Heart left ventricle (tissue), 16 donors: ENCODE measurements at regions of chr9 and their contacts with region 1.

Region 1: DNA sequence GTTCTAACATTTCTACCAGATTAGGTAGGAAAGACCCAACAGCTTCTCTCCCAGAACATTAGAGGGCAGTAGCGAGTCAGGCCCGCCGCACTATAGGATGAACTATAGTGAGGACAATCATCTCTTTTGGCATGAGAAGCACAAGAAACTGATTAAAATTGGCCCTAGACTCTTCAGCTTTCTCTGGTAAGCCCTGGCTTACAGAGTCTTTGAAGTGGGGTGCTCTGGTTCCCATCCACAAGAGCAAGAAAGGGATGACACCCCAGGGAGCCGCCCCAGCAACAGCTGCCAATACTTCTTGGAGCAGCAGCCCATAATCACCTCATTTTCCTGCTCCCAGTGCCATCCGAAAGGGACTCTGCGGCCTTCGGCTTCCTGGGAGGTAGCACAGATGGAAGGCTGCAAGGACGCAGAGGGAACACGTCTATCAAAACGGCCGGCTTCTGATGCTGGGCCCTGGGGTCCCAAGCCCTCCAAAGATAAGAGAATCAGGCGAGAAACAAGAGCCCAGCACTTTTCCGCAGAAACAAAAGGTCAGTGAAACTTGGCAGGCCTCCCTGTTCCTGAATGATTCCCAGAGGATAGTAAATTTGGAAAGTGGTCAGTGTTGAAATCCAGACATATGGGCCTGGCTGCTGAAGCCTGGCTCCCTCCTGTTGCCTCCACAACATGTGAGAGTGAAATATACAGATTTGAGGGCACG is 69.3 kb downstream of the HSD17B3 start:
- DNase-seq: peak; percentile 57 to 76 (median 70)
- ATAC-seq: peak; percentile 77 to 85 (median 84)
- H3K4me3 ChIP-seq: peak overlapping the region in 1 of 12 donors; percentile 4
- H3K27ac ChIP-seq: peak overlapping the region in 11 of 12 donors; percentile 33 to 73 (median 56)
- H3K4me1 ChIP-seq: peaks cover 0 to 23% (median 12%) of the 10 kb centered on the region in 12 donors
- H3K27me3 ChIP-seq: no peaks in the 10 kb centered on the region
- CTCF ChIP-seq: peak; percentile 77 to 94 (median 88)
- POLR2A ChIP-seq: no peak

Region 2: GRCh38 chr9:96309850-96310249 is 77.2 kb after region 1 on chr9:
- intact Hi-C with region 1: loop called in 6 of 10 experiments (anchors 5 kb)
- DNase-seq: no peak
- ATAC-seq: no peak
- H3K4me3 ChIP-seq: no peak overlapping the region
- H3K27ac ChIP-seq: no peak overlapping the region
- H3K4me1 ChIP-seq: no peaks in the 10 kb centered on the region
- H3K27me3 ChIP-seq: no peaks in the 10 kb centered on the region
- CTCF ChIP-seq: no peak
- POLR2A ChIP-seq: no peak

Region 3: GRCh38 chr9:96317335-96317980 is 84.8 kb after region 1 on chr9:
- intact Hi-C with region 1: loop called (anchors 2 to 5 kb)
- DNase-seq: peak in 2 of 5 donors; percentile 20 to 36
- ATAC-seq: peak in 3 of 4 donors; percentile 59 to 71 (median 62)
- H3K4me3 ChIP-seq: no peak overlapping the region
- H3K27ac ChIP-seq: no peak overlapping the region
- H3K4me1 ChIP-seq: peaks cover 0 to 4% (median 0%) of the 10 kb centered on the region in 12 donors
- H3K27me3 ChIP-seq: no peaks in the 10 kb centered on the region
- CTCF ChIP-seq: peak; percentile 62 to 92 (median 86)
- POLR2A ChIP-seq: no peak

Region 4: GRCh38 chr9:96661711-96662110 is 429.0 kb after region 1 on chr9:
- intact Hi-C with region 1: loop called in 3 of 10 experiments (anchors 5 to 10 kb)
- DNase-seq: no peak
- ATAC-seq: no peak
- H3K4me3 ChIP-seq: no peak overlapping the region
- H3K27ac ChIP-seq: no peak overlapping the region
- H3K4me1 ChIP-seq: peaks cover 0 to 7% (median 0%) of the 10 kb centered on the region in 12 donors
- H3K27me3 ChIP-seq: no peaks in the 10 kb centered on the region
- CTCF ChIP-seq: no peak
- POLR2A ChIP-seq: no peak

Region 5: GRCh38 chr9:96667361-96667728 is 434.7 kb after region 1 on chr9:
- intact Hi-C with region 1: loop called in 3 of 10 experiments (anchors 5 to 10 kb)
- DNase-seq: no peak
- ATAC-seq: no peak
- H3K4me3 ChIP-seq: no peak overlapping the region
- H3K27ac ChIP-seq: no peak overlapping the region
- H3K4me1 ChIP-seq: peaks cover 0 to 5% (median 0%) of the 10 kb centered on the region in 12 donors
- H3K27me3 ChIP-seq: no peaks in the 10 kb centered on the region
- CTCF ChIP-seq: no peak
- POLR2A ChIP-seq: no peak